PC-9 (cell line): ENCODE measurements at regions of chr1 and their contacts with region 1.

Region 1: GRCh38 chr1:219703358-219703619 is 90.4 kb upstream of the ZC3H11B start:
- DNase-seq: no peak
- H3K4me3 ChIP-seq: no peak overlapping the region
- H3K27ac ChIP-seq: no peak overlapping the region
- H3K4me1 ChIP-seq: peaks cover 15% of the 10 kb centered on the region; the same call in 1 of the 2 replicates
- H3K27me3 ChIP-seq: no peaks in the 10 kb centered on the region
- CTCF ChIP-seq: no peak

Region 2: GRCh38 chr1:220315070-220315839 is 612.0 kb after region 1 on chr1:
- CTCF ChIA-PET with region 1: no interaction called
- POLR2A ChIA-PET with region 1: interaction called, 10 read pairs
- intact Hi-C with region 1: no loop called
- DNase-seq: no peak
- H3K4me3 ChIP-seq: no peak overlapping the region
- H3K27ac ChIP-seq: no peak overlapping the region
- H3K4me1 ChIP-seq: no peaks in the 10 kb centered on the region
- H3K27me3 ChIP-seq: no peaks in the 10 kb centered on the region
- CTCF ChIP-seq: no peak